Activated CD4-positive, alpha-beta T cell treated with anti-CD3 and anti-CD28 coated beads for 36 hours (primary cell): ENCODE measurements at regions of chr10 and their contacts with region 1.

Region 1: DNA sequence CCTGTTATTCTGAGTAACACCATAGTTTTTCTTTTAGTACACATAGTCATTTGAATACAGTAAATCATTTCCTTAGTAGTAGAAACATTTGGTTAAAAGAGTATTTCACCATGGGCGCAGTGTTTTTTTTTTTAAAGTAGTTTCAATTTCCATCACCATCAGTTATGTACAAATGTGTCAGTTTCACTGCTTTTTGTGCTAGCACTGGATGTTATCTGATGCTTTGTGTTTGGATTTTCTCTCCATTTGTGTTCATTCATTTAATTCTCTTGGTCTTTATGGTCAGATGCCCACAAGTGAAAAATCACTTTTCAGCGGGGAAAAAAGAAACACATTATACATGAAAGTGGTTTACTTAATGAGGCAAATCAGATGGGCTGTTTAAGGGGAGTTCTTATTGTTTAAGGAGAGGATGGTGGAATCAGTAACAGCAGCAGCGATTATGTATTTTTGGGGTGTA is 16.0 kb upstream of the HK1 start:
- DNase-seq: no peak
- ATAC-seq: peak; percentile 95
- H3K4me3 Mint-ChIP-seq: no peak overlapping the region
- H3K27ac Mint-ChIP-seq: peak overlapping the region; percentile 69
- H3K4me1 Mint-ChIP-seq: peaks cover 16% of the 10 kb centered on the region
- H3K27me3 Mint-ChIP-seq: no peaks in the 10 kb centered on the region

Region 2: DNA sequence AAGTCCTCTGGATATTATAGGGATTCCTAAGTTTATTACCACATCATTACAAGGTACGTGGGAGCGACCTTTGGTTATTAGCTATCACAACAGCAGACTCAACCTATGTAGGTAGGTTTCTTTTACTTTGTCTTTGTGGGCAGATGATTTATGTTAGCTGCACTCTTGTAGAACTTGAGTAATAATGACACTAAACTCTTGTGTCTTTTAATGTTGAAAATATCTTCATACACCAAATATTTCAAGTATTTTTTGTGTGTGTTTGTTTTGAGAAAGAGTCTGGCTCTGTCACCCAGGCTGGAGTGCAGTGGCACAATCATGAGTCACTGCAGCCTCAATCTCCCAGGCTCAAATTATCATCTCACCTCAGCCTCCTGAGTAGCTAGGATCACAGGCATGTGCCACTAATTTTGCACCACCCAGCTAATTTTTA is 101.5 kb before region 1 on chr10:
- CTCF ChIA-PET with region 1: no interaction called
- POLR2A ChIA-PET with region 1: no interaction called
- intact Hi-C with region 1: no loop called
- DNase-seq: no peak
- ATAC-seq: no peak
- H3K4me3 Mint-ChIP-seq: no peak overlapping the region
- H3K27ac Mint-ChIP-seq: no peak overlapping the region
- H3K4me1 Mint-ChIP-seq: no peaks in the 10 kb centered on the region
- H3K27me3 Mint-ChIP-seq: no peaks in the 10 kb centered on the region

Region 3: GRCh38 chr10:69202332-69202731 is 60.0 kb before region 1 on chr10:
- CTCF ChIA-PET with region 1: interaction called, 3 read pairs
- POLR2A ChIA-PET with region 1: interaction called, 12 read pairs
- intact Hi-C with region 1: no loop called
- DNase-seq: no peak
- ATAC-seq: peak; percentile 38
- H3K4me3 Mint-ChIP-seq: no peak overlapping the region
- H3K27ac Mint-ChIP-seq: no peak overlapping the region
- H3K4me1 Mint-ChIP-seq: peaks cover 5% of the 10 kb centered on the region
- H3K27me3 Mint-ChIP-seq: no peaks in the 10 kb centered on the region

Region 4: GRCh38 chr10:69222157-69223027 is 39.9 kb before region 1 on chr10:
- CTCF ChIA-PET with region 1: no interaction called
- POLR2A ChIA-PET with region 1: no interaction called
- intact Hi-C with region 1: loop called in 1 of 2 experiments (anchors 1 kb)
- DNase-seq: peak; percentile 90
- ATAC-seq: peak; percentile 92
- H3K4me3 Mint-ChIP-seq: peak overlapping the region; percentile 52
- H3K27ac Mint-ChIP-seq: peak overlapping the region; percentile 91
- H3K4me1 Mint-ChIP-seq: peaks cover 32% of the 10 kb centered on the region
- H3K27me3 Mint-ChIP-seq: no peaks in the 10 kb centered on the region

Region 5: DNA sequence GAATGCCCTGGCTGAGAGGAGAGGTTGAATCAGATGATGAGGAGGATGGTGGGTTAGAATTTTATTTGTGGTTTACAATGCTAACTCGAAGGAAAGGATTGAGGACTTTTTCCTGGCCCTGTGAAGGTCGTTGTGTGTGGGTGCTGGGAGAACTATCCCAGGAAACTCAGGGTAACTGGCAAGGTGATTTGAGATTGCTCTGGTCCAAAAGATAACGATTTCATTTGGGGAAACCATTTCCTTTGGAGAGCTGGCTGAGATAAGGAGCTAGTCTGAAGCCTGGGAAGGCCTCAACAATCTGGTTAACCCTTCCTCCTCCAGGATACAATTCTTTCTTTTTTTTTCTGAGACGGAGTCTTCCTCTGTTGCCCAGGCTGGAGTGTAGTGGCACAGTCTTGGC is 49.0 kb after region 1 on chr10:
- CTCF ChIA-PET with region 1: no interaction called
- POLR2A ChIA-PET with region 1: no interaction called
- intact Hi-C with region 1: no loop called
- DNase-seq: no peak
- ATAC-seq: no peak
- H3K4me3 Mint-ChIP-seq: no peak overlapping the region
- H3K27ac Mint-ChIP-seq: no peak overlapping the region
- H3K4me1 Mint-ChIP-seq: peaks cover 7% of the 10 kb centered on the region
- H3K27me3 Mint-ChIP-seq: no peaks in the 10 kb centered on the region

Region 6: GRCh38 chr10:69492091-69492750 is 229.9 kb after region 1 on chr10:
- CTCF ChIA-PET with region 1: no interaction called
- POLR2A ChIA-PET with region 1: no interaction called
- intact Hi-C with region 1: no loop called
- DNase-seq: no peak
- ATAC-seq: no peak
- H3K4me3 Mint-ChIP-seq: no peak overlapping the region
- H3K27ac Mint-ChIP-seq: no peak overlapping the region
- H3K4me1 Mint-ChIP-seq: no peaks in the 10 kb centered on the region
- H3K27me3 Mint-ChIP-seq: no peaks in the 10 kb centered on the region